ENCODE measurements at regions of chr11 and their contacts with region 1.

Region 1: GRCh38 chr11:33742249-33742851 is 6.1 kb upstream of the CD59 start:
- H3K4me3 Mint-ChIP-seq: no peak overlapping the region
- H3K27ac Mint-ChIP-seq: no peak overlapping the region
- H3K4me1 Mint-ChIP-seq: peaks cover 10% of the 10 kb centered on the region
- H3K27me3 Mint-ChIP-seq: peaks cover 18% of the 10 kb centered on the region

Region 2: DNA sequence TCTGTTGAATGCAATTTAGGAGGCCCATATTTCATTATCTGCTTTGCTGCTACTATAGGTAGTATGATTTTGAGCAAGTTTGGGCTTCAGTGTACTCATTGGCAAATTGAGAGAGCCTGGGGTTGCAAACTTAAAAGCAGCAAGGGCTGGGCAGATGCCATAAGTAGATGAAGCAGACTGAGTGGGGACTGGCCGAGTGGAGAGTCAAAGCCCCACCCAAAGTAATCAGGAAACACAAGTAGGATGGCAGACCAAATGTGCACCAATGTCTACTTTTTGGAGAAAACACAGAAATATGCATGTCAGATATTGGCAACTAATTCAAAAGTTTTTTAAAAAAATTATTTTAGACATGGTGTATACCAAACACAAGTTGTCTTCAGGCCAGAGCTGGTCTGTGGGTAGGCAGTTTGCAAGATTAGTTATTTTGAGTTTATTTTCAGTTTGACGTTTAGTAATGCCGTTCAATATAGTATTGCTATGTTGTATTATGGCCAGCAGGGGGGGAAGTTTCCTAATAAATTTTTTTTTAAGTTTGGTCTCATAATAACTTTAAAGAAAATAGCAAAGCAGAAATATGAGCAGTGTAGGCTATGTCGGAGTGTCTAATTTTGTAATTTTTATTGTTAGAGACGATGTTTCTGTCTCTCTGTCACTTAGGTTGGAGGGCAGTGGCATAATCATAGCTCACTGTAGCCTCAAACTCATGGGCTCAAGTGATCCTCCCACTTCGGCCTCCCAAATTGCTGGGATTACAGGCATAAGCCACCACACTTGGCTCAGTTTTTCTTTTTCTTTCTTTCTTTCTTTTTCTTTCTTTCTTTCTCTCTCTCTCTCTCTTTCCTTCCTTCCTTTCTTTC is 380.1 kb before region 1 on chr11:
- intact Hi-C with region 1: loop called (anchors 5 kb)
- H3K4me3 Mint-ChIP-seq: no peak overlapping the region
- H3K27ac Mint-ChIP-seq: no peak overlapping the region
- H3K4me1 Mint-ChIP-seq: peaks cover 9% of the 10 kb centered on the region
- H3K27me3 Mint-ChIP-seq: peaks cover 16% of the 10 kb centered on the region

Region 3: DNA sequence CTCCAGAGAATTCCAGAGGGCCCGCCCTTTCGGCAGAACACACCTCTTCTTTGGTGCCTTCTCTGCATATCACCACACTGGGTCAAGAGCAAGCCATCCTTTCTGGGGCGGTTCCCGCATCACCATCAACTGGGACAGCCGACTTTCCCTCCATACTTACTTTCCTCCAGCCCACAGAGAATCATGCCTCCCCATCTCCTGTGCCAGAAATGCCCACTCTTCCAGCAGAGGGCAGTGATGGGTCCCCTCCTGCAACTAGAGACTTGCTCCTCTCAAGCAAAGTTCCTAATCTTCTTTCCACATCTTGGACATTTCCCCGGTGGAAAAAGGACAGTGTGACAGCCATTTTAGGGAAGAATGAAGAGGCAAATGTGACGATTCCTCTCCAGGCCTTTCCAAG is 199.4 kb before region 1 on chr11:
- intact Hi-C with region 1: loop called (anchors 1 kb)
- H3K4me3 Mint-ChIP-seq: no peak overlapping the region
- H3K27ac Mint-ChIP-seq: no peak overlapping the region
- H3K4me1 Mint-ChIP-seq: no peaks in the 10 kb centered on the region
- H3K27me3 Mint-ChIP-seq: peaks cover 18% of the 10 kb centered on the region

Region 4: DNA sequence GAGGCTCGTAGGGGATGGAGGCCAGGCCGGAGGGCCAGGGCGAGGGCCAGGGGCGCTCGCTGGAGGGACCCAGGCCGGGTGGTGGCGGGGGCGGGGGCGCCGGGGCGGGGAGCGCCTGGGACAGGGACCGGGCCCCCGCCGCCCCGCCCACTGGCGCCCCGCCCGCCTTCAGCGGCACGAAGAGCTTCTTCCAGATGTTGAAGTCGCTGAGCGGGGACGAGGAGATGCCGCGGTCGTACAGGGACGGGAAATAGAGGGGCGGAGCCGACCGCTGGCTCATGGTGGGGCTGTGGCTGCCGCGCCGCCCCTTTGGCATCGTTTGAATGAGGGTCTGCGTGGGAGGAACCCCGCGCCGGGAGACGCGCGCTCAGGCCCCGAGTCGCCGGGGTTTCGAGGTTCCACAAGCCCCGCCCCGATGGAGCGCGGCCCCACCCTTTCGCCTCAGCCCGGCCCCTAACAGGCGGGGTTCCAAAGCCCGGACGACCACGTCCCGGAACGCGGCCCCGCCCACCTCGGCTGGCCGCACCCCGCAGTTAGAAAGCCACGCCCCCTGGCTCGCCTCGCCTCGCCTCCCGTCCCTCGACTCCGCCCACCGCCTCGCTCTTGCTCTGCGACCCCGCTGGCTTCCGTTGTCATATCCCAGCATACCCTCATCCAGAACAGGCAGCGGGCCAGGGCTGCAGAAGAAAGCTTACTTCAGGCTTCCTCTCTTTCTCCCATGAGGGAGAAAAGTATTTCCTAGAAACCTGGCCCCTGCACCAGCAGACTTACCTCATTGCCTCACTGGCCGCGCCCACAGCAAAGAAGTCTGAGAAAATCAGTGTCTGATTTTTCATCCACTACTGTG is 41.7 kb before region 1 on chr11 and contains the start of gene C11orf91:
- intact Hi-C with region 1: loop called (anchors 5 kb)
- H3K4me3 Mint-ChIP-seq: peak within 1 kb of the TSS; percentile 87
- H3K27ac Mint-ChIP-seq: peak within 1 kb of the TSS; percentile 72
- H3K4me1 Mint-ChIP-seq: peaks cover 41% of the 10 kb centered on the region
- H3K27me3 Mint-ChIP-seq: peaks cover 41% of the 10 kb centered on the region

Region 5: DNA sequence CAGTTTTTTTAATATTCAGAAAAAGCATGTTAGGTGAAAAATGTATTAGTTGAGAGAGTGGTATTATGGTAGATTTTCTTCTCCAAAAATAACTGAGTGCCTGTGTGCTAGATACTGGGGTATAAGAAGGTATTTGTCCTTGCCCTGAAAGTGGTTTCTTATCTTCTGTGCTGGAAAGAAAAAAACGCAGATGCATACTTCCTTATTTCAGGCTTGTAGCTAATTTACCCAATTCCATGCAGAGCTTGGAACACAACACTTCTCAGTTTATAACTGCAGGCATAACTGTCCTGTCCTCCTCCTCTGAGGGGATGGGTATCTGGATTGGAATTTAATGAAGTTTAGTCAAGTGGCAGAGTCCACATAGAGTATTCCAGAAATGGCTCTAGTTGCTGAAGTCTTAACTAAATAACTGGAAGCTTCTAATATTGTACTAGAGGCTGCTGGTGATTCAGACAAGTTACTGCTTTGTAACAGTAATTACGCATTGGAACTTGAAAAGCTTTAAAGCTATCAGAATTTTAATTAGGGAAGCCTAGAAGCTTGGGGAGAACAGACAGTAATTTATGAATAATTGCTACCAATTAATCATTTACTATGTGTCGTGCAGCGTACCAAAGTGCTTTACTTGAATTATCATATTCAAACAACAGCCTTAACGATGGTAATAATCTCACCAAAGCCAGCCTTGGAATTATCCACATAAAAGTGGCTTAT is 29.0 kb before region 1 on chr11:
- intact Hi-C with region 1: loop called (anchors 2 kb)
- H3K4me3 Mint-ChIP-seq: no peak overlapping the region
- H3K27ac Mint-ChIP-seq: no peak overlapping the region
- H3K4me1 Mint-ChIP-seq: peaks cover 12% of the 10 kb centered on the region
- H3K27me3 Mint-ChIP-seq: no peaks in the 10 kb centered on the region

Region 6: GRCh38 chr11:33790040-33790439 is 47.7 kb after region 1 on chr11:
- intact Hi-C with region 1: no loop called
- H3K4me3 Mint-ChIP-seq: no peak overlapping the region
- H3K27ac Mint-ChIP-seq: no peak overlapping the region
- H3K4me1 Mint-ChIP-seq: no peaks in the 10 kb centered on the region
- H3K27me3 Mint-ChIP-seq: peaks cover 29% of the 10 kb centered on the region

Region 7: GRCh38 chr11:33847251-33847650 is 104.9 kb after region 1 on chr11:
- intact Hi-C with region 1: no loop called
- H3K4me3 Mint-ChIP-seq: no peak overlapping the region
- H3K27ac Mint-ChIP-seq: no peak overlapping the region
- H3K4me1 Mint-ChIP-seq: no peaks in the 10 kb centered on the region
- H3K27me3 Mint-ChIP-seq: peaks cover 4% of the 10 kb centered on the region

Region 8: DNA sequence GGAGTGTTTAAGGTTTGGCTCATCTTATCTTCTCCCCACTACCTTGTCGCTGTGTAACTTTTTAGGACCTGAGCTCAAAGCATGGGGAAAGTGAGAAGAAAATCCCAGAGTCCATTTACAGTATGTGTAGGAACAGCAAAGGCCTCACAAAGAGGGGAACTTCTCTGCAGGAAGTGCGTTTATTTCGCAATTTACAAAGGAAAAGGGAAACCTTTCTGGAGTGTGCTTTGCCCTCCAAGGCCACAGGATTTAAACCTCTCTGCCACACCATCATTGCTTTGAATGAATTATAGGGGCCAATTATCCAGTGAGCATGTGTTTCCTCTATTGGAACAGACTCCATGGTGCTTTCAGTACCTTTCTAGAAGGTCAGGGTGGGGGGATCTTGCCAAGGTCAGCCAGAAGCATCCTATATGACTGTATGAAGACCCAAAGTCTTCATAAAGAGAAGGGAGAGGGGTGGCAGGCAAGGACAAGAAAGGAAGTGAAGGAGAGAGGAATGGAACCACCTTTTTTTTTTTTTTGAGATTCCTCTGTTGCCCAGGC is 217.6 kb after region 1 on chr11:
- intact Hi-C with region 1: no loop called
- H3K4me3 Mint-ChIP-seq: no peak overlapping the region
- H3K27ac Mint-ChIP-seq: peak overlapping the region; percentile 55
- H3K4me1 Mint-ChIP-seq: peaks cover 32% of the 10 kb centered on the region
- H3K27me3 Mint-ChIP-seq: no peaks in the 10 kb centered on the region

Region 9: GRCh38 chr11:34427186-34427805 is 684.9 kb after region 1 on chr11:
- intact Hi-C with region 1: no loop called
- H3K4me3 Mint-ChIP-seq: no peak overlapping the region
- H3K27ac Mint-ChIP-seq: peak overlapping the region; percentile 22
- H3K4me1 Mint-ChIP-seq: peaks cover 62% of the 10 kb centered on the region
- H3K27me3 Mint-ChIP-seq: no peaks in the 10 kb centered on the region

Measured in dendritic cell treated with granulocyte-macrophage colony-stimulating factor and Interleukin-4, amounts not matched to agents 40 ng/mL and 50 ng/mL, for 4 days (primary cell).